ENCODE measurements at regions of chr2 and their contacts with region 1.

Region 1: DNA sequence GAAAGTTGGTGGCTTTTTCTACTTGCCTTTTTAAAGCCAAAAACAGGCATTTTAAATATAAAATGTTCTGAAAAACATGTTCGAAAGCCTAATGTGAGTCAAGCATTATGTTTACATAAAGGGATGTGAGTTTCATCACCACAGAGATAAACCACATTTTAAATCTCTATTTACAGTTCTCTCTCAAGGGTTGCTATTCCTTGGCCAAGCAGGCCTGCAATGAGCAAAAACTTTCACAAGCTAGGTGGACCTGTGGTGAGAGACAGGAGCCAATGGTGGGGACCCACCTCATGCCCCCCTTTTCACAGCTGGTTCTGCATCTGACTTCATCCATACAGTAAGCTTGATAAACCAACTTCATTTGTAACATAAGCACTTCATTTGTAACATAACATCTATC is 65.1 kb downstream of the CUL3 start:
- DNase-seq: peak; percentile 33
- H3K4me3 ChIP-seq: peak overlapping the region; percentile 64
- H3K27ac ChIP-seq: peak overlapping the region; percentile 97
- H3K4me1 ChIP-seq: peaks cover 81% of the 10 kb centered on the region
- CTCF ChIP-seq: no peak

Region 2: DNA sequence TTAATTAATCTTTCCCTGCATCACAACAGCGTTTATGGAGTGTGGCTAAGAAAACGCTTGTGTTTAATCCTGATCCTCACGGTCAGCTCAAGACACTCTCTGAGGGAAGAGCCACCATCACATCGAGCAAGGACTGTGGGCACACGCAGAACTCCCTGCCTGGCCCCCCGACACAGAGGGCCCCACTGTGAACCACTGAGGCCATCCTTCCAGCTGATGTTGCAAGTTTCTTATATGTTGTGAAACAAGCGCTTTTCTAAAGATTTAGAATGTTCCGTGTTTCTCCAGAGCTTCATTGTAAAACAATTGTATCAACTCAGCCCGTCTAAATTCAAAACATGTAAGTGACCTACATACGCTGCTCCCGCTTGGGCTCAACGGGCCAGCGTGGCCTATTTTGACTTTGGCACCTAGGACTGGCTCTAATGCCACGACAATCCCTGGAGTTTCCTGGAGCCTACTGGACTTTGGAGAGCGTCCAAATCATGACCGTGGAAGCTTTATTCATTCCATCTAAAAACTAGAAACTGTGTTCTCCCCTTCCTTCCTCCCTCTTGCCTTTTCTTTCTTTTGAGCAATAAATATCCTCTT is 515.9 kb before region 1 on chr2:
- CTCF ChIA-PET with region 1: no interaction called
- POLR2A ChIA-PET with region 1: no interaction called
- intact Hi-C with region 1: no loop called
- DNase-seq: no peak
- H3K4me3 ChIP-seq: no peak overlapping the region
- H3K27ac ChIP-seq: no peak overlapping the region
- H3K4me1 ChIP-seq: no peaks in the 10 kb centered on the region
- CTCF ChIP-seq: no peak

Region 3: GRCh38 chr2:224492531-224492930 is 27.5 kb before region 1 on chr2:
- CTCF ChIA-PET with region 1: interaction called, 3 read pairs
- POLR2A ChIA-PET with region 1: interaction called, 37 read pairs
- intact Hi-C with region 1: loop called (anchors 1 kb)
- DNase-seq: peak; percentile 45
- H3K4me3 ChIP-seq: peak overlapping the region; percentile 8
- H3K27ac ChIP-seq: peak overlapping the region; percentile 100
- H3K4me1 ChIP-seq: peaks cover 58% of the 10 kb centered on the region
- CTCF ChIP-seq: no peak

Region 4: GRCh38 chr2:224532931-224533330 is 12.9 kb after region 1 on chr2:
- CTCF ChIA-PET with region 1: no interaction called
- POLR2A ChIA-PET with region 1: interaction called, 46 read pairs
- intact Hi-C with region 1: no loop called
- DNase-seq: no peak
- H3K4me3 ChIP-seq: no peak overlapping the region
- H3K27ac ChIP-seq: no peak overlapping the region
- H3K4me1 ChIP-seq: peaks cover 8% of the 10 kb centered on the region
- CTCF ChIP-seq: no peak

Region 5: DNA sequence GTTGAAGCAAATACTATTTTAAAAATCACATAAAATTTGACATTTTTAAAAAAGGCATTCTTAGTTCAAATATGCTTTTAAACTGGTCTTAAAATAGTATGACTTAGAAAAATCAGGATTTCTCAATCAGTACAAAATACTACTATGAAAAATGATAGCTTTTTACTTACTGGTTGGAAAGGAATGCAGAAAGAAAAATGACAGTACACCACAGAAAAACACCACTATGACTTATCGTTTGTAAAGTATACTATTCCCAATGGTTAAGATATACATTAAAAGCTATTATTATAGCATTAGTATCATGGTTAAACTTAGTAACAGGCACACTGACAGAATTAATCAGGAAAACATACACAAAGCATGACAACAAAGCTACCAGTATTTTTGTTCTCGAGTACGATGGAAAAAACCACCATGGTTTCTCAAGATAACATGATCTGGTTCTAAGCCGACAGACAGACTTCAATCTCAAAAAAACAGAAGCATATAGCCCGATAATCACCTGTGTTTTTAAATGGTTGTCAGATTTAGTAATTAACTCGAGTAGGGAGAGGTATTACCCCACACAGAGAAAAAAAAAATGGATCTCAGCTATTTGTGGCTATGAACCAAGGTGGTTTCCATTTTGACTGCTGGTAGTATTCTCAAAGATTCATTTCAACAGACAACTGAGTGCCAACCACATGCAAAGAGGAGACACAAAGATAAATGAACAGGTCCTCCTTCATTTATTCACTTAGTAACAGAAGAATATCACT is 26.0 kb after region 1 on chr2:
- CTCF ChIA-PET with region 1: interaction called, 6 read pairs
- POLR2A ChIA-PET with region 1: interaction called, 13 read pairs
- intact Hi-C with region 1: no loop called
- DNase-seq: no peak
- H3K4me3 ChIP-seq: peak overlapping the region; percentile 44
- H3K27ac ChIP-seq: peak overlapping the region; percentile 51
- H3K4me1 ChIP-seq: peaks cover 37% of the 10 kb centered on the region
- CTCF ChIP-seq: no peak

Region 6: GRCh38 chr2:224576088-224576715 is 56.1 kb after region 1 on chr2:
- CTCF ChIA-PET with region 1: interaction called, 3 read pairs
- POLR2A ChIA-PET with region 1: interaction called, 31 read pairs
- intact Hi-C with region 1: no loop called
- DNase-seq: peak; percentile 36
- H3K4me3 ChIP-seq: peak overlapping the region; percentile 45
- H3K27ac ChIP-seq: peak overlapping the region; percentile 54
- H3K4me1 ChIP-seq: peaks cover 100% of the 10 kb centered on the region
- CTCF ChIP-seq: no peak

Region 7: GRCh38 chr2:224666951-224667553 is 147.0 kb after region 1 on chr2:
- CTCF ChIA-PET with region 1: no interaction called
- POLR2A ChIA-PET with region 1: no interaction called
- intact Hi-C with region 1: no loop called
- DNase-seq: peak; percentile 95
- H3K4me3 ChIP-seq: peak overlapping the region; percentile 53
- H3K27ac ChIP-seq: peak overlapping the region; percentile 98
- H3K4me1 ChIP-seq: peaks cover 53% of the 10 kb centered on the region
- CTCF ChIP-seq: no peak

Region 8: DNA sequence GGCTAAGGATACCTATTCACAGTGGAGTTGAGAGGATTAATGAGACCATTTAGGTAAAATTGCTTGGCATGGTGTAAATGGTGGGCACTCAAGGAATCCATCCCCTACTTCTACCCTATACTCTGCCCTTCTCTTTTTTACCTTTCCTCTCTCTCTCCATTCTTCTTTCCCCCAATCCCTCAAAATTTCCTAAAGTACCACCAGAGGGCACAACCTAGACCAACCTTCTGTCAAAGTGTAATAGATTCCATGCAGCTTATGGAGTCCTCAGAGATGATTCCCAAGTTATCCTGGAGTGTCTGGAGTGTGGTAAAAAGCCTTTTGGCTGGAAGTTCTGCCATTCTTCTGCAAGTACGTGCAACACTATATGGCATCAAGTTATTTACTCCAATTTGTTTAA is 229.1 kb after region 1 on chr2:
- CTCF ChIA-PET with region 1: no interaction called
- POLR2A ChIA-PET with region 1: interaction called, 6 read pairs
- intact Hi-C with region 1: loop called (anchors 5 kb)
- DNase-seq: no peak
- H3K4me3 ChIP-seq: no peak overlapping the region
- H3K27ac ChIP-seq: no peak overlapping the region
- H3K4me1 ChIP-seq: peaks cover 60% of the 10 kb centered on the region
- CTCF ChIP-seq: peak; percentile 56